Activated CD4-positive, alpha-beta T cell treated with anti-CD3 and anti-CD28 coated beads for 36 hours (primary cell): ENCODE measurements at regions of chr19 and their contacts with region 1.

Region 1: DNA sequence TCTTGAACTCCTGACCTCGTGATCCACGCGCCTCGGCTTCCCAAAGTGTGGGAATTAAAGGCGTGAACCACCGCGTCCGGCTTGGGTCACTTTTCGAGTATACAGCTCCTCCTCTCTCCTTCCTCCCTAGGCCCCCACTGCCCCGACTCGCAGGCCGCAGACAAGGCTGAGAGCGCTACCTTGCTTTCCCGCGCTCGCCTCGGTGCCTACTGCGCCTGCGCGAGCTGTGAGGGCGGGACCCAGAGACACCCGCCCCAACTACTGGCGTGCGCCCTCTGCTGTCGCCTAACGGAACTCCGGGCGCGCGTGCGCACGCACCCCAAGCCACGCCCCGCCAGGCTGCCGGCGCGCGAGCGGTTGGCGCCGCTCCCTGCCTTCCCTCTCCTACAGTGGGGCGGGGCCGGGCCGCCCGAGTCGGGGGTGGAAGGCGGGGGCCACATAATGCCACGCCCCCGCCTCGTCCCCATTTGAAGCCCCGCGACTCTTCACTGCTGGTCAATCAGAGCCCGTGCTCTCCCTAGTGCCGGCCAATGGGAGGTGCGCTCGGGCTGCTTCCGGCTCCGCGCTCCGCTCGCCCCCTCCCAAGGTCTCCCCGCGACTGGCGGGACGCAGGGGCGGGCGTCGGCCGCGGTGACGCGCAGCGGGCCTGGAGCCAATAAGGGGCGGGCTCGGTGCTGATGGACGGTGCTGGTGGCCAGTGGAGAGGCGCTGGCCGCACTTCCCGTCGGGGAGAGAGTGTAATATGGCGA is at the start of gene RAB8A:
- DNase-seq: peak; percentile 99
- ATAC-seq: peak; percentile 96
- H3K4me3 Mint-ChIP-seq: peak within 1 kb of the TSS; percentile 96
- H3K27ac Mint-ChIP-seq: peak within 1 kb of the TSS; percentile 97
- H3K4me1 Mint-ChIP-seq: peaks cover 39% of the 10 kb centered on the region
- H3K27me3 Mint-ChIP-seq: no peaks in the 10 kb centered on the region
- total RNA-seq, gene RAB8A: 165 to 218 TPM

Region 2: GRCh38 chr19:15222738-15223648 is 888.3 kb before region 1 on chr19:
- CTCF ChIA-PET with region 1: no interaction called
- POLR2A ChIA-PET with region 1: no interaction called
- intact Hi-C with region 1: loop called in 1 of 2 experiments (anchors 5 kb)
- DNase-seq: peak; percentile 88
- ATAC-seq: peak; percentile 99
- H3K4me3 Mint-ChIP-seq: peak overlapping the region; percentile 71
- H3K27ac Mint-ChIP-seq: no peak overlapping the region
- H3K4me1 Mint-ChIP-seq: peaks cover 15% of the 10 kb centered on the region
- H3K27me3 Mint-ChIP-seq: peaks cover 18% of the 10 kb centered on the region

Region 3: DNA sequence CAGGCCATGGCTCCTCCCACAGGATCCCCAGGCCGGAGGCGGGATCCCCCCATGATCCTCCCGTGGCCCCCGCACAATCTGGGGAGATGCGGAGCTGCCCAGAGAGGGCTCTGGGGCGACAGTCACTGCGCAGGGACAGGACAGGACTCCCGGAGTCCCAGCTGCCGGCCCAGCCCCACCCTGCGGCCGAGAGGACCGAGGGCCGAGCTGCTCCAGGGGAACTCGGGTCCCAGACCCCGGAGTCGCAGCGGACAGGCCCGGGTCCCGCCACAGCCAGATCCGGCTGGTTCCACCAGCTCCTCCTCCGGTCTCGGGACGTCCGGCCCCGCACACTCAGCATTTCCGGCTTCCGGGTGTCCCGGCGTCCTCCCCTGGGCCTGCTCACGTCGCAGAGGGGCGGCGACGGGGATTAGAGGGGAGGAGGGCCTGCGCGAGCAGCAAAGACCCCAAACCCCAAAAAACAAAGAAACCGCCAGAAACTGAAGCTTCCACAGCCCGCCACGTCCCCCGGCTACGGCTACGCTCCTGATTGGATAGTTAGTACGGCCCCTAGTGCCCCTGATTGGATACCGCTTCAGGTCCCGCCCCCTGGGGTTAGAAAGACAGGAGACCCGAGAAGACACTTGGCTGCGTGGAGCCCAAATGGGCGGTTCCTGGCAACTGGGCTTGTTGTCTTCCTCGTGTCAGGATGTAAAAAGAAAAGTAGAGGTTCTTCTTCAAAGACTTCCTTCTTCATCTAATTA is 274.6 kb before region 1 on chr19:
- CTCF ChIA-PET with region 1: no interaction called
- POLR2A ChIA-PET with region 1: no interaction called
- intact Hi-C with region 1: loop called in 1 of 2 experiments (anchors 1 kb)
- DNase-seq: peak; percentile 96
- ATAC-seq: peak; percentile 96
- H3K4me3 Mint-ChIP-seq: peak overlapping the region; percentile 85
- H3K27ac Mint-ChIP-seq: peak overlapping the region; percentile 98
- H3K4me1 Mint-ChIP-seq: peaks cover 15% of the 10 kb centered on the region
- H3K27me3 Mint-ChIP-seq: no peaks in the 10 kb centered on the region

Region 4: DNA sequence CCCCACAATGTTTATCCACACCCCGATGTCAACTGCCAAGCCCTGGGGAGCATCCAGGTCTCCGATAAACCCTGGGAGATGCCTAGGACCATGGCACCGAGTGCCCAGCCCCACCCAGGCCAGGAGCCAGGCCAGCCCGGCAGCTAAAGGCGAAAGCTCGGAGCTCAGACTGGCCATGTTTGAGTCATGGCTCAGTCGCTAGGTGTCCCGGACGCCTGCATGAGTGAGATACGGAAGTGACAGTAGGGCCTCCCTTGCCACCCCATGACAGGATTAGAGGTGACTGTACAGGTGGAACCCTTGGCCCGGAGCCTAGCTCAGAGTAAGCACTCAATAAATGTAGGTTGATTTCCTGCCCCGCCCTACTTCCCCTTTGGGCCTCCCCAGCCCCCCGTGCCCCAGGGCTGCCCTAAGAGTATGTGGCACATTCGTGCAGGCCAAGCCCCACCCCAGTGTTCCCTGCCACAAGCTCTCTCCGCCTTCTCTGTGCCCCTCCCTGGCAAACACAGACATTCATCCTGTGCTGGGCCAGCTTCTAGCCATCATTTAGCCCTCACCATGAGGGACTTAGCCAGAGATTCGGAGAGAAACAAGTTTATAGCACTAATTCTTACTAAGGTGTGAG is 40.9 kb before region 1 on chr19:
- CTCF ChIA-PET with region 1: interaction called, 5 read pairs
- POLR2A ChIA-PET with region 1: interaction called, 9 read pairs
- intact Hi-C with region 1: loop called (anchors 1 to 2 kb)
- DNase-seq: peak; percentile 92
- ATAC-seq: peak; percentile 97
- H3K4me3 Mint-ChIP-seq: no peak overlapping the region
- H3K27ac Mint-ChIP-seq: no peak overlapping the region
- H3K4me1 Mint-ChIP-seq: peaks cover 42% of the 10 kb centered on the region
- H3K27me3 Mint-ChIP-seq: no peaks in the 10 kb centered on the region

Region 5: GRCh38 chr19:16153582-16154336 is 42.4 kb after region 1 on chr19:
- CTCF ChIA-PET with region 1: no interaction called
- POLR2A ChIA-PET with region 1: interaction called, 11 read pairs
- intact Hi-C with region 1: no loop called
- DNase-seq: peak; percentile 52
- ATAC-seq: peak; percentile 50
- H3K4me3 Mint-ChIP-seq: no peak overlapping the region
- H3K27ac Mint-ChIP-seq: no peak overlapping the region
- H3K4me1 Mint-ChIP-seq: no peaks in the 10 kb centered on the region
- H3K27me3 Mint-ChIP-seq: no peaks in the 10 kb centered on the region

Region 6: DNA sequence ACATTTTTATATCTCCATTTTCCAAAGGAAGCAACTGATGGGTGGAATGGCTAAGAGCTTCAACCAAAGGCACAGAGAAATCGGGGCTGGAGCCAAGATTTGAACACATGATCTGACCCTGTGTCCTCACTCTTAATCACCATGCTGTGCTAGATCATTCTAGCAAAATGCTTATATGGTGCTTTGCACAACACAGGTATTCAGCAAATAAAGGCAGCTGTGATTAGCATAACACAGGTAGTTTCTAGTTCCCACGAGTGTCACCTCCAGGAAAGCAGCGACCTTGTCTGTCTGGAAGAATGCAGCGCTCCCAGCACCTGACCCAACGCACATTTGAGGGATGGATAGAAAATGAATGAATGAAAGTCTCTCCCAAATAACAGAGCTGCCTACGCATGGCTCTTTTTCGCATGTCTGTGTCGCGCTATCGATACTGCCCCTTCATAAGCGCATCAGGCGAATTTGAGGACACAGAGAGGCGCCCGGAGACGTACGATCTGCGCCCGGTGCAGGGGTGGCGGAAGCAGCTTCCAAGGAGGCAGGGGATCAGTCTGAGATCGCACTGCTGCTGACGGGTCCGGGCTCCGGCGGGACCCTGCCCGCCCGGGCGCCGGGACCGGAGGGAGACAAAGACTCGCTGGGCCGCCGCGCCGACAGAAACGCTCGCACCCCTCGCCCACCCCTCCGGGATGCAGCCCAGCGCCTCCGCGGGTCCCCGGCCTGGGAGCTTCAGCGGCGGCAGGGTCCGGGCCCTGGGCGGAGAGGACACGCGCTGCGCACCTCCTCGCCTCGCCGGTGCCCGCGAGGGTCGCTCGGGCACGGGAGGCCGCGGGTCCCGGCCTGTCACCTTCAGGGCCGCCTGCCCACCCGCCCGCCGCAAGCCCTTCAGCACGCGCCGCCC is 359.8 kb after region 1 on chr19:
- CTCF ChIA-PET with region 1: no interaction called
- POLR2A ChIA-PET with region 1: no interaction called
- intact Hi-C with region 1: loop called in 1 of 2 experiments (anchors 1 kb)
- DNase-seq: peak; percentile 60
- ATAC-seq: peak; percentile 20
- H3K4me3 Mint-ChIP-seq: peak overlapping the region; percentile 85
- H3K27ac Mint-ChIP-seq: peak overlapping the region; percentile 72
- H3K4me1 Mint-ChIP-seq: peaks cover 37% of the 10 kb centered on the region
- H3K27me3 Mint-ChIP-seq: peaks cover 2% of the 10 kb centered on the region

Region 7: GRCh38 chr19:16628183-16628983 is 517.0 kb after region 1 on chr19 and contains the start of gene MED26:
- CTCF ChIA-PET with region 1: no interaction called
- POLR2A ChIA-PET with region 1: no interaction called
- intact Hi-C with region 1: loop called in 1 of 2 experiments (anchors 1 kb)
- DNase-seq: peak; percentile 98
- ATAC-seq: peak; percentile 92
- H3K4me3 Mint-ChIP-seq: peak within 1 kb of the TSS; percentile 87
- H3K27ac Mint-ChIP-seq: peak within 1 kb of the TSS; percentile 100
- H3K4me1 Mint-ChIP-seq: peaks cover 39% of the 10 kb centered on the region
- H3K27me3 Mint-ChIP-seq: no peaks in the 10 kb centered on the region
- total RNA-seq, gene MED26: 13.6 to 14.5 TPM